Cardiac septum (tissue), 1 donor: ENCODE measurements at regions of chr11 and their contacts with region 1.

Region 1: GRCh38 chr11:109946322-109946846 is 146.8 kb upstream of the ZC3H12C start:
- DNase-seq: peak; percentile 85

Region 2: DNA sequence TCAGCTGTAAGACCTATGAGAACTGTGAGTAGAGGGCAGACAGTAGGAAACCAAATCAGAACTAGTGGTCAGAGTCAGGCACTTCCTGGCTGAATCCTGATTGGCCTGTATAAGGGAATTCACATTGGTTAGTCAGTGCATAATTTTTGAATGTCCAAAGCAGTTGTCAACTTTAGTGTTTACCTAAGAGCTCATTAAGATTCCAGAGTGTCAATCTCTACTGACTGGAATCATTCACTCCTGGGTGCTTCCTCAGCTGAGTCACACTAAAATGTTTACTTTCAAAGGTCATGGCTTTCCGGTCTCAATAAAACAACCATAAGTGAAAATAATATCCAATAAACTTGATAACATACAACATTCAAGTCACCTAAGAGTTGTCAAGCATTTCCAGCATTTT is 218.3 kb before region 1 on chr11:
- intact Hi-C with region 1: no loop called
- DNase-seq: no peak

Region 3: DNA sequence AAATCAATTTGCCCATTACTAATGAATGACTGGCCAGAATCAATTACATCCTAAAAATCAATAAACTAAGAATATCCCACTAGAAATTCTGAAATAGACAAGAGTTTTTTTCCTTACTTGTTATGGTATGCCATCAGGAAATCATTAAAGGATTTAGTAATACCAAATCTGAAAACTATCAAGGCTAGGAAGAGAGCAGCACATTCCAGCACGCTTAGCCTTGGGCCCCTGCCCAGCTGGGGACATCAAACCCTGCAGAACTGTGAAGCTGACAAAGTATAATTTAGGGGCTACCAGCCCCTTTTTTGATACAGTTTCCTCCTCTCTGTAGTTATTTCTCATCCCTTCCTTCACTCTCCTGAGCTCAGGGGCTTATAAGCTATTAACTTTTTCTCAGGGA is 100.9 kb before region 1 on chr11:
- intact Hi-C with region 1: no loop called
- DNase-seq: no peak

Region 4: DNA sequence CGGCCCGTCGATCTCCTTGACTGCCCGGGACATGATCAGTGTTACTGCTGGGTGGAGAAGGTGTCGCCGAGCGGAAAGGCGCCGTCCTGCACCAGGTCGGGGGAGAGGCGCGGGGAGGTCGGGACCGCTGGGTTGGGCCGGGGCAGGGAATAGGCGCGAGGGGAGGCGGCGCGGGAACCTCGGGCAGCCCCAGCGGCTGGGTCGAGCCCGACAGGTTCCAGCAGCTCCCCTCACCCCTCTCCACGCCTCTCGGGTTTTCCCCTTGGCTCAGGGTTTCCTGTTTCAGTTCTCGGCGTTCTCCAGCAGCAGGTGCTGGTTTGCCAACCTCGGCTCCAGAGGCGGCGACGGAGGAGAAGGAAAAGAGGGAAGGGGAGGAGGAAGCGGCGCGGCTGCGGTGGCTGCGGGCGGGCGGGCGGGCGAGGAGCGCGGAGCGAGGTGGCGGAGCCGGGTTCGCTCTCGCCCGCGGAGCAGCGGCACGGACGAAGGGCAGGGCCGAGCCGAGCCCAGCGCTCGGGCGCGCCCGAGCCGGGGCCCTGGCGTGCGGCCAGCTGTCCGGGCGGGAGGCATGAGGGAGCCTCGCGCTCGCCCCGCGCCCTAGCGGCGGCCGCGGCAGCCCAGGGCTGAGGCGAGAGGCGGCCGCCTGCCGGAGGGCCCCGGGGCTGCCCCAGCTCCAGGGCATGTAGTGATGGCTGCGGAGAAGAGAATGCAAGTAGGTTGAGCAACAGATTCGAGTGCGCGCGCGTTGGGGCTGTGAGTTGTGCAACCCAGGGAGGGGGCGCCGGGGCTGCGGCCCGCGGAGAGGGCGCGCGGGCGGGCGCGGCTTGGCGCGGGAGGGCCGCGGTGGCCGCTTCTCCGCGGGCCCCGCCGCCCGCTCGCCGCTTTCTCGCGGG is 146.4 kb after region 1 on chr11 and contains the start of gene ZC3H12C:
- intact Hi-C with region 1: loop called (anchors 5 kb)
- DNase-seq: peak; percentile 87
- total RNA-seq, gene ZC3H12C: 20.0 TPM

Region 5: DNA sequence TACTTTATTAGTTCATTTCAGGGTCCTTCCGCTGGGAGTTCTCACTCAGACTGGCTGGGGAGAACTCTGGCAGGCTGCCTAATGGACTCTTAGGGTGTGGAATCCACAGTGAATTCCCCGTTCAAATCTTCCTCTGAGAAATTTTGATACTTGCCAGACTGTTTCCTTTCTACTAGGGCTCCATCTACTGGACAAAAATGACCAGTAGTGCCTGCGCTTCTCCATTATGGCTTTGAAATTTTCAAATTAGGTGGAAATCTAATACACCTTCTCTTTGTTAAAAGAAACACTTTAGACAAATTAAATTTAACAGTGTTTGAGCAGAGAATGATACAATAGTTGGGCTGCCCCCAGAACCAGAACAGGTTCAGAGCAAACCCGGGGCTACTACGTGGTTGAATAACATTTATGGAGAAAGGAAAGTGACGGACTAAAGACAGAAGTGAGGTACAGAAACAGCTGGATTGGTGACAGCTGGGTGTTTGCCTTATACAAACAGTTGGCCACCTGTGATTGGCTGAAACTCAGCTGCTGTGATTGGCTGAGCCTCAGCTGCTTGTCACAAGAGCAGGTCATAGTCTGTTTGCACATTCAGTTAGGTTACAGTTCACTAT is 430.4 kb after region 1 on chr11:
- intact Hi-C with region 1: loop called (anchors 5 kb)
- DNase-seq: no peak